Gastrocnemius medialis (tissue), 4 donors: ENCODE measurements at regions of chr10 and their contacts with region 1.

Region 1: GRCh38 chr10:27504007-27504807 is at the start of gene RAB18:
- DNase-seq: peak; percentile 96 to 98
- ATAC-seq: peak; percentile 95 to 96
- H3K4me3 ChIP-seq: peak within 1 kb of the TSS; percentile 84 to 91 (median 88)
- H3K27ac ChIP-seq: peak within 1 kb of the TSS; percentile 90 to 95 (median 93)
- H3K4me1 ChIP-seq: peaks cover 22 to 30% of the 10 kb centered on the region in 2 donors
- H3K27me3 ChIP-seq: no peaks in the 10 kb centered on the region
- CTCF ChIP-seq: peak in 1 of 5 experiments; percentile 22
- POLR2A ChIP-seq: peak; percentile 91 to 92
- total RNA-seq, gene RAB18: 46.0 to 51.6 (median 47.1) TPM

Region 2: GRCh38 chr10:27155066-27155754 is 349.0 kb before region 1 on chr10 and contains the start of gene MASTL:
- in situ Hi-C with region 1: no loop called
- intact Hi-C with region 1: loop called (anchors 10 kb)
- DNase-seq: peak; percentile 79 to 89
- ATAC-seq: peak; percentile 85 to 87
- H3K4me3 ChIP-seq: peak within 1 kb of the TSS; percentile 65 to 99 (median 92)
- H3K27ac ChIP-seq: peak within 1 kb of the TSS; percentile 89 to 99 (median 95)
- H3K4me1 ChIP-seq: peaks cover 12 to 22% of the 10 kb centered on the region in 2 donors
- H3K27me3 ChIP-seq: no peaks in the 10 kb centered on the region
- CTCF ChIP-seq: no peak
- POLR2A ChIP-seq: peak; percentile 89 to 92
- total RNA-seq, gene MASTL: 2.0 to 3.6 (median 2.9) TPM

Region 3: DNA sequence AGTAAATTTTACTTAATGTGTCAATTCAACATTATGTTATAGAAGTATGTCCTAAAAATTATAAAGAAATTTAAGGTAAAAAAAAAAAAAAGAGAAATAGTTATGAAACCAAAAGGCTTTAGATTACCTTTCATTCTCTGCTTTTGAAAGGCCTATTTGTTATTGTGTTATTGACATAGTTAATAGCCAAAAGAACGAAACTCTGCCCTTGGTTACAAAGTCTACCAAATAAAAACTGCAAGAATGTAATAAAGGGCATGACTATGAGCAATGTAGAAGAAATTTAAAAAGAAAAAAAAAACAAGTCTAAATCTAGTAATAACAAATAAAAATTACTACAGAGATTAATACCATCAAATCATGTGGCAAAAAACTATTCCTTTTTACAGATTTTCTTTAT is 274.2 kb before region 1 on chr10:
- in situ Hi-C with region 1: loop called in 2 of 4 experiments (anchors 10 to 25 kb)
- intact Hi-C with region 1: no loop called
- DNase-seq: no peak
- ATAC-seq: no peak
- H3K4me3 ChIP-seq: no peak overlapping the region
- H3K27ac ChIP-seq: no peak overlapping the region
- H3K4me1 ChIP-seq: no peaks in the 10 kb centered on the region
- H3K27me3 ChIP-seq: no peaks in the 10 kb centered on the region
- CTCF ChIP-seq: no peak
- POLR2A ChIP-seq: no peak

Region 4: GRCh38 chr10:27241652-27242472 is 262.3 kb before region 1 on chr10:
- in situ Hi-C with region 1: loop called in 3 of 4 experiments (anchors 10 to 25 kb)
- intact Hi-C with region 1: loop called (anchors 2 kb)
- DNase-seq: peak; percentile 86 to 88
- ATAC-seq: peak; percentile 83 to 84
- H3K4me3 ChIP-seq: peak overlapping the region; percentile 62 to 98 (median 83)
- H3K27ac ChIP-seq: peak overlapping the region; percentile 95 to 98 (median 98)
- H3K4me1 ChIP-seq: peaks cover 12 to 13% of the 10 kb centered on the region in 2 donors
- H3K27me3 ChIP-seq: no peaks in the 10 kb centered on the region
- CTCF ChIP-seq: peak; percentile 28 to 60 (median 39)
- POLR2A ChIP-seq: peak; percentile 95 to 96

Region 5: GRCh38 chr10:27525819-27526218 is 21.6 kb after region 1 on chr10:
- in situ Hi-C with region 1: no loop called
- intact Hi-C with region 1: loop called (anchors 1 kb)
- DNase-seq: no peak
- ATAC-seq: peak; percentile 82 to 96
- H3K4me3 ChIP-seq: no peak overlapping the region
- H3K27ac ChIP-seq: peak overlapping the region; percentile 35 to 50 (median 40)
- H3K4me1 ChIP-seq: peaks cover 36 to 59% of the 10 kb centered on the region in 2 donors
- H3K27me3 ChIP-seq: no peaks in the 10 kb centered on the region
- CTCF ChIP-seq: no peak
- POLR2A ChIP-seq: no peak

Region 6: GRCh38 chr10:28532383-28533175 is 1028.4 kb after region 1 on chr10 and contains the start of gene WAC:
- in situ Hi-C with region 1: no loop called
- intact Hi-C with region 1: loop called (anchors 2 kb)
- DNase-seq: peak; percentile 92 to 94
- ATAC-seq: peak; percentile 91 to 93
- H3K4me3 ChIP-seq: peak within 1 kb of the TSS; percentile 78 to 99 (median 90)
- H3K27ac ChIP-seq: peak within 1 kb of the TSS; percentile 95 to 99 (median 98)
- H3K4me1 ChIP-seq: peaks cover 33 to 37% of the 10 kb centered on the region in 2 donors
- H3K27me3 ChIP-seq: no peaks in the 10 kb centered on the region
- CTCF ChIP-seq: peak in 3 of 5 experiments; percentile 14 to 17 (median 14)
- POLR2A ChIP-seq: peak in 1 of 2 donors; percentile 93
- total RNA-seq, gene WAC: 55.7 to 83.4 (median 69.6) TPM